ENCODE measurements at regions of chr2 and their contacts with region 1.

Region 1: GRCh38 chr2:1769703-1770422 is 25.5 kb upstream of the PXDN start:
- DNase-seq: peak; percentile 81
- H3K4me3 Mint-ChIP-seq: no peak overlapping the region
- H3K27ac Mint-ChIP-seq: no peak overlapping the region
- H3K4me1 Mint-ChIP-seq: no peaks in the 10 kb centered on the region
- H3K27me3 Mint-ChIP-seq: no peaks in the 10 kb centered on the region
- CTCF ChIP-seq: peak; percentile 93

Region 2: GRCh38 chr2:950080-950966 is 819.5 kb before region 1 on chr2 and contains the start of gene SNTG2:
- CTCF ChIA-PET with region 1: interaction called, 4 read pairs
- POLR2A ChIA-PET with region 1: no interaction called
- intact Hi-C with region 1: loop called (anchors 5 kb)
- DNase-seq: no peak
- H3K4me3 Mint-ChIP-seq: peak within 1 kb of the TSS; percentile 19
- H3K27ac Mint-ChIP-seq: no peak within 1 kb of the TSS
- H3K4me1 Mint-ChIP-seq: no peaks in the 10 kb centered on the region
- H3K27me3 Mint-ChIP-seq: peaks cover 11% of the 10 kb centered on the region
- CTCF ChIP-seq: no peak
- total RNA-seq, gene SNTG2: not detected in 2 replicates

Region 3: DNA sequence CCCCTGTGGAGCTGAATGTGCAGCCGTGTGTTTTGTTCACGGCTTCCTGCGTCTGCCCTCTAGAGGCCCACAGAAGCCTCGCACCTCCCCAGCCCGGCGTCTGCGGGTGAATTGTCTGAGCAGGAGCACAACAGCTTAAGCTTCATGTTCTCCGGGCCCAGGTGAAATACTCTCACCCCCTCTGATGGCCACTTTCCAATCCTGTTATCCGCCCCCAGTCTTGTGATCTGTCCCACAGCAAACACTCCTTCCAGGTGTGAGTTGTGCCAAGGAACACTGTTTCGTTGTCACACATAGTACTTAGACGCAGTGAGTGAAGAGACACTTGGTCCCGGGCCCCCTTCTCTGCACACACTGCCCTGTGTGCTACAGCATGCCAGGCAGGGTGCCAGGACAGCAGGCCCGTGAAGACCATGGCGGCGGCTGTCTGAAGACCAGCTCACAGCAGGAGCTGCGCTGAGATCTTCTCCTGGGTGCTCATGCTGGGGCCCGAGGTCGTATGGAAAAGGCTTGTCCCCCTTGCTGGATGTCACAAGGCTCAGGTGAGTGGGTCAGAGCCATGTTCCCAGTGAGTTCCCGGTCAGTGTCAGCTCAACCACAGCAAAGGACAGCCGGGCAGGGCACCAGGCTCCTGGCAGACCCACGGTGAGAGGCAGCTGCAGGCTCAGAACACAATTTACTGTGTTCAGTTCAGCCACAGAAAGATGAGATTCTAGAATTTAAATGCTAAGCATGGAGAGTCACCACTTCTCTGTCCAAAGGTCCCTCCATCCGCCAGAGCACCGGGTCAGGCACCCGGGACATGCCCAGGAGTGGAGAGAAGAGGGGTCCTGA is 18.7 kb before region 1 on chr2:
- CTCF ChIA-PET with region 1: interaction called, 63 read pairs
- POLR2A ChIA-PET with region 1: interaction called, 4 read pairs
- intact Hi-C with region 1: no loop called
- DNase-seq: peak; percentile 74
- H3K4me3 Mint-ChIP-seq: no peak overlapping the region
- H3K27ac Mint-ChIP-seq: no peak overlapping the region
- H3K4me1 Mint-ChIP-seq: peaks cover 13% of the 10 kb centered on the region
- H3K27me3 Mint-ChIP-seq: no peaks in the 10 kb centered on the region
- CTCF ChIP-seq: peak; percentile 88

Region 4: DNA sequence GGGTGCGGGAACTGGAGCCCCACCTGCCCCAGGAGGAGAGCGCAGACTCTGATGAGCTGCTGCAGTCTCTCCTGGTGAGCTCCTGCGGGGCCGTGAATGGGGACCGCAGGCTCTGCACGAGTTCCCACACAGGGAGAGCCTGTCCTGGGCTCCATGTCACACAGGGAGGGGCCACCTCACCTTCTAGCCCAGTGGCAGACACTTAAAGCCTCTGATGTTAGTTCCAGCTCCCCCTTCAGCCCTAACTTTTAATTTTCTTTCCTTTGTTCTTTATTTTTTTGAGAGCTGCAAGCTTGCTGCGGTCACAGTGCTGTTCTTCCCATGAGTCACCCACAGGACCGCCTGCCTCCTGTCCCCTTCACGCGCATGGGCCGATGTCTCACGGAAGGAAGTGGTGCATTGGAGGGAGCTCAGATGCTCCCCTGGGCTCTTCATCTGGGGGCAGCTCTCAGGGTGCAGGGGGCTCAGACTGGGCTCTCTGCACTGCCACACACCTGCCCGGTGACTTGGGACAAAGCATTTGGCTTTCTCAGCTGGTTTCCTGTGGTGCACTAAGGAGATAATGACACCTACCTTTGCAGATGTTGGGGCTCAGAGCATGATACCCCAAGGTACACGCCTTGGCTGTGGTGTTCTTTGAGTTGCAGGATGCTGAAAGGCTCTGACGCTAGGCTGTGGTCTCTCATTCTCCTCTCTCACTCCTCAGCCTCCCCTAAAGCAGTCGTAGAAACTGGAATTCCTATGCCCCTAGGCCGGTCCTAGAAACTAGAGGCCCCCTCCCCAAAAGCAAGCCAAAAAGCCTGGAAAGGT is 11.6 kb after region 1 on chr2:
- CTCF ChIA-PET with region 1: interaction called, 32 read pairs
- POLR2A ChIA-PET with region 1: no interaction called
- intact Hi-C with region 1: no loop called
- DNase-seq: no peak
- H3K4me3 Mint-ChIP-seq: no peak overlapping the region
- H3K27ac Mint-ChIP-seq: no peak overlapping the region
- H3K4me1 Mint-ChIP-seq: no peaks in the 10 kb centered on the region
- H3K27me3 Mint-ChIP-seq: peaks cover 44% of the 10 kb centered on the region
- CTCF ChIP-seq: no peak

Region 5: DNA sequence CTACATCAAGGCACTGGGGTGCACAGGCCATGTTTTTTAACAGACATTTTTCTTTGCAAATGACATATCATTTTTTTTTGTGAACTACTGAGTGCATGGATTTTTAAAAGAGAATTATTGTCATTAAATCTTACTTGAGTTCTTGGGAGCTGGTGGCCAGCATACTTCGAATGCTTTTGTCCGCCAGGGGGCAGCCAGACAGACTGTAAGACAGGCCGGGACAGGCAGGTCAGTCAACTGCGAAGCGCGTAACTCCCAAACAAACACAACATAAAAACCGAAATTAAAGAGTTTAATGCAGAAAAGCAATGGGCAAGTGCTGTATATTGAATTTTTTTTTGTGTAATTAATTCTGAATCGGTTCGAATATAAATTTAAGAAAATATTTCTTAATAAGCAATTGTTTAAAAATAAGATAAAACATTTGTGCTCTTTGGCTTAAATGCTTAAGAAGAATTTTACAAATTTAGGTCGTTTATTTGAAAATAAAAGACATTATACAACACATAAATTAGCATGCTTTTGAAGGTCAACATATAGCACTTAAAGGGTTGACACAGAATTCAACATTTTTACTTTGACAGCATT is 116.6 kb after region 1 on chr2:
- CTCF ChIA-PET with region 1: no interaction called
- POLR2A ChIA-PET with region 1: no interaction called
- intact Hi-C with region 1: no loop called
- DNase-seq: peak; percentile 74
- H3K4me3 Mint-ChIP-seq: no peak overlapping the region
- H3K27ac Mint-ChIP-seq: no peak overlapping the region
- H3K4me1 Mint-ChIP-seq: peaks cover 10% of the 10 kb centered on the region
- H3K27me3 Mint-ChIP-seq: peaks cover 25% of the 10 kb centered on the region
- CTCF ChIP-seq: peak; percentile 39

Region 6: DNA sequence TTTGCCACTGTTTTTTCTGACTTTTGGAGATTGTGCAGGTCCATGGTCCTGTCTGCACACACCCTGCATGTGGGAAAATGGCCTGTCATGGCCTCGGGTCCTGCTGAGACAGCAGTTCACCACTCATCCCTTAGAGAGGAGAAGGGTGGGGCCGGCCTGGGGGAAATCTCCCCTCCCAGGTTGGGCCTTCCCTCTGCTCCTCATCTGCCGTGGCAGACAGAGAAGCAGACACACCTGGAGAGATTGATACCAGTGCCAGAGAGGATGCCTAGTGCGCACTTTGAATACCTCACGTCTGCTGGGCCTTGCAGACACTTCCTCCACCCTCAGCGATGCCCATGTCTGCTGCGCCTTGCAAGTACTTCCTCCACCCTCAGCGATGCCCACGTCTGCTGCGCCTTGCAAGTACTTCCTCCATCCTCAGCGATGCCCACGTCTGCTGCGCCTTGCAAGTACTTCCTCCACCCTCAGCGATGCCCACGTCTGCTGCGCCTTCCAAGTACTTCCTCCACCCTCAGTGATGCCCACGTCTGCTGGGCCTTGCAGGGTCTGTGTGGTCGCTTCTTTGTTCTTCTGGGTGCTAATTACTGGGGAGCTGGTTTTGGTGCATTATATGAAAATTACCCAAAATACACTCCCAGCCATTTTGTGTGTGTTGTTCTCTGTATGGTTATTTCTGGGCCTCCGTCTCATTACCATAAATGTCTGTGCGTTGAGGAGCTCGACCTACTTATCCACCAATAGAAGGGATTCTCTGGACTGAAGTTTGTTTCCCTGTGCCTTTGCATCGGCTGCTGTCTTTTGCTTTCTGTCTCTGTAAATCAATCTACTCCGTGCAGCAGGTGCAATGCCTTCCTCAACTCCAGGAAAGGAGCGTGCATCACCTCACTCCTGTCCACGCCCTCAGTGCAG is 161.4 kb after region 1 on chr2:
- CTCF ChIA-PET with region 1: no interaction called
- POLR2A ChIA-PET with region 1: no interaction called
- intact Hi-C with region 1: no loop called
- DNase-seq: no peak
- H3K4me3 Mint-ChIP-seq: no peak overlapping the region
- H3K27ac Mint-ChIP-seq: no peak overlapping the region
- H3K4me1 Mint-ChIP-seq: no peaks in the 10 kb centered on the region
- H3K27me3 Mint-ChIP-seq: peaks cover 10% of the 10 kb centered on the region
- CTCF ChIP-seq: no peak

Region 7: GRCh38 chr2:2112416-2113105 is 342.7 kb after region 1 on chr2:
- CTCF ChIA-PET with region 1: no interaction called
- POLR2A ChIA-PET with region 1: no interaction called
- intact Hi-C with region 1: no loop called
- DNase-seq: no peak
- H3K4me3 Mint-ChIP-seq: no peak overlapping the region
- H3K27ac Mint-ChIP-seq: no peak overlapping the region
- H3K4me1 Mint-ChIP-seq: peaks cover 5% of the 10 kb centered on the region
- H3K27me3 Mint-ChIP-seq: peaks cover 90% of the 10 kb centered on the region
- CTCF ChIP-seq: no peak

Measured in MCF 10A (cell line).